Activated CD8-positive, alpha-beta T cell treated with anti-CD3 and anti-CD28 coated beads for 36 hours (primary cell): ENCODE measurements at regions of chr6 and their contacts with region 1.

Region 1: DNA sequence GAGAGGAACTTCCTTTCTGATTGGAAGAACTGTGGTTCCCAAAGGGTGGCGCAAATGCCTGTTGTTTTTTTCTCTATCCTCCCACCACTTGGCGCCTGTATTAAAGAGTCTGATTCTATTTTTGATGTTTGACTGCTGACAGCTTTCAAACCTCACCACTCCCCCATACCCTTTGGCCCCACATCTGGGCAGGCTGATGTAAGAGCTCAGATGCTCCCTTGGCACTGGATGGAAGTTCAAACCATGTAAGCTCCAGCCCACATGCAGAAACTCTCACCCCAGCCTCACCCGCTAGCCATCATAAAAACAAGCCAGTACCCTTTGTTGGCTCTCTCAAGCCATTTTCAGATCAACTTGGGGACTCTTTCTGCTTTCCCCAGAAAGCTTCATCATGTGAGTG is 20.0 kb upstream of the TMEM14A start:
- DNase-seq: no peak
- ATAC-seq: no peak
- H3K4me3 Mint-ChIP-seq: no peak overlapping the region
- H3K27ac Mint-ChIP-seq: no peak overlapping the region
- H3K4me1 Mint-ChIP-seq: peaks cover 6% of the 10 kb centered on the region
- H3K27me3 Mint-ChIP-seq: peaks cover 3% of the 10 kb centered on the region
- CTCF ChIP-seq: no peak

Region 2: GRCh38 chr6:52419809-52420670 is 230.9 kb before region 1 on chr6 and contains the start of gene EFHC1:
- CTCF ChIA-PET with region 1: interaction called, 16 read pairs
- POLR2A ChIA-PET with region 1: no interaction called
- intact Hi-C with region 1: no loop called
- DNase-seq: peak; percentile 99
- ATAC-seq: peak; percentile 94
- H3K4me3 Mint-ChIP-seq: no peak within 1 kb of the TSS
- H3K27ac Mint-ChIP-seq: no peak within 1 kb of the TSS
- H3K4me1 Mint-ChIP-seq: peaks cover 27% of the 10 kb centered on the region
- H3K27me3 Mint-ChIP-seq: no peaks in the 10 kb centered on the region
- CTCF ChIP-seq: no peak
- total RNA-seq, gene EFHC1: 1.9 to 2.1 TPM

Region 3: GRCh38 chr6:52598123-52598823 is 52.7 kb before region 1 on chr6:
- CTCF ChIA-PET with region 1: interaction called, 28 read pairs
- POLR2A ChIA-PET with region 1: no interaction called
- intact Hi-C with region 1: no loop called
- DNase-seq: peak; percentile 64
- ATAC-seq: peak; percentile 76
- H3K4me3 Mint-ChIP-seq: no peak overlapping the region
- H3K27ac Mint-ChIP-seq: no peak overlapping the region
- H3K4me1 Mint-ChIP-seq: peaks cover 7% of the 10 kb centered on the region
- H3K27me3 Mint-ChIP-seq: no peaks in the 10 kb centered on the region
- CTCF ChIP-seq: peak; percentile 70

Region 4: DNA sequence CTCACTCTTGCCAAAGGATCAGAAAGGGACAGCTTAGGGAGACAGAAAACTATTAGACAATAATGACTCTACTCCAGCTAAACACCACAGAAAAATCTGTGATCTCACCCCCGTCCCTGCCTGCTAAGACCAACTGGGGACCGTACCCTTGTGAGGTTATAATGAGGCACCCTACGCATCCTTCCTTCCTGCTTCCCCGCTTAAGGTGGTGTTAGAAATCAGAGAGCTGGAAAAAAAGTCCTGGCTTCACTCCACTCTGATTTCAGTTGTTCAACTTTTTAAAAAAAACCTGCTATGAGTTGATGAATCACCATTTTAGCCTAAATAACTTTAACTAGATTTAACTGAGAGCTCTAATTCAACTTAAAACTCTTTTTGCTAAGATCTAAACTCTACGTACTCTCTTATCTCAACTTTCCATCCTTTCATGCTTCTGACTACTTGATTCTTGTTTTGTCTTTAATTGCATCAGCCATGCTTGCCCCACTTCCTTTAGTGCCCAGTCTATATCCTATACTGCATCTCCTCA is 15.8 kb before region 1 on chr6:
- CTCF ChIA-PET with region 1: interaction called, 46 read pairs
- POLR2A ChIA-PET with region 1: no interaction called
- intact Hi-C with region 1: no loop called
- DNase-seq: peak; percentile 7
- ATAC-seq: peak; percentile 82
- H3K4me3 Mint-ChIP-seq: no peak overlapping the region
- H3K27ac Mint-ChIP-seq: peak overlapping the region; percentile 61
- H3K4me1 Mint-ChIP-seq: peaks cover 10% of the 10 kb centered on the region
- H3K27me3 Mint-ChIP-seq: peaks cover 6% of the 10 kb centered on the region
- CTCF ChIP-seq: no peak

Region 5: GRCh38 chr6:52640170-52640569 is 10.8 kb before region 1 on chr6:
- CTCF ChIA-PET with region 1: interaction called, 46 read pairs
- POLR2A ChIA-PET with region 1: no interaction called
- intact Hi-C with region 1: no loop called
- DNase-seq: no peak
- ATAC-seq: no peak
- H3K4me3 Mint-ChIP-seq: no peak overlapping the region
- H3K27ac Mint-ChIP-seq: no peak overlapping the region
- H3K4me1 Mint-ChIP-seq: peaks cover 7% of the 10 kb centered on the region
- H3K27me3 Mint-ChIP-seq: peaks cover 21% of the 10 kb centered on the region
- CTCF ChIP-seq: no peak

Region 6: GRCh38 chr6:52664186-52664990 is 13.4 kb after region 1 on chr6:
- CTCF ChIA-PET with region 1: interaction called, 98 read pairs
- POLR2A ChIA-PET with region 1: interaction called, 3 read pairs
- intact Hi-C with region 1: no loop called
- DNase-seq: peak; percentile 86
- ATAC-seq: peak; percentile 97
- H3K4me3 Mint-ChIP-seq: no peak overlapping the region
- H3K27ac Mint-ChIP-seq: no peak overlapping the region
- H3K4me1 Mint-ChIP-seq: no peaks in the 10 kb centered on the region
- H3K27me3 Mint-ChIP-seq: no peaks in the 10 kb centered on the region
- CTCF ChIP-seq: no peak

Region 7: GRCh38 chr6:52670502-52671409 is 19.8 kb after region 1 on chr6 and contains the start of gene TMEM14A:
- CTCF ChIA-PET with region 1: interaction called, 26 read pairs
- POLR2A ChIA-PET with region 1: no interaction called
- intact Hi-C with region 1: no loop called
- DNase-seq: peak; percentile 93
- ATAC-seq: peak; percentile 99
- H3K4me3 Mint-ChIP-seq: peak within 1 kb of the TSS; percentile 82
- H3K27ac Mint-ChIP-seq: peak within 1 kb of the TSS; percentile 78
- H3K4me1 Mint-ChIP-seq: peaks cover 31% of the 10 kb centered on the region
- H3K27me3 Mint-ChIP-seq: no peaks in the 10 kb centered on the region
- CTCF ChIP-seq: no peak
- total RNA-seq, gene TMEM14A: 13.4 to 15.1 TPM